ENCODE measurements at regions of chr11 and their contacts with region 1.

Region 1: GRCh38 chr11:7582338-7582985 is 68.7 kb downstream of the PPFIBP2 start:
- DNase-seq: no peak
- H3K4me3 ChIP-seq: no peak overlapping the region
- H3K4me1 ChIP-seq: peaks cover 39% of the 10 kb centered on the region
- H3K27me3 ChIP-seq: no peaks in the 10 kb centered on the region

Region 2: DNA sequence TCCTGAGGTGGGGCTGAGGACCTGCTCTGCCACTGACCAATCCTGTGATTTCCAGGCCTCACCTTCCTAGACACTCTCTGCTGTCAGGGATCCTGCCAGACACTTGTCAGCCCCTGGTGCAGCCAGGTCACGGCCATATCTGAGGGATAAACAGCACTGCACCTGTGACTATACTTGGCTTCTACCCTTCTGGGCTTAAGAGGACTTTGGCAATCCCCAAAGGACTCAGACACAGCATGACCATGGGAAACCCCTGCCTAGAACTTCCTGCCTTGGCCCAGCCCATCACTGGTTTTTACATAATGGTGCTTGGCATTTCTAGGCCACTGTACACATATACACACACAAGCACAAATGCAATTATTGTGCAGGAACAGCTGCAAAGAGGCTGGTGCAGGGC is 108.7 kb before region 1 on chr11:
- in situ Hi-C with region 1: no loop called
- DNase-seq: no peak
- H3K4me3 ChIP-seq: no peak overlapping the region
- H3K4me1 ChIP-seq: no peaks in the 10 kb centered on the region
- H3K27me3 ChIP-seq: no peaks in the 10 kb centered on the region

Region 3: GRCh38 chr11:7637447-7638157 is 55.1 kb after region 1 on chr11:
- in situ Hi-C with region 1: no loop called
- DNase-seq: no peak
- H3K4me3 ChIP-seq: no peak overlapping the region
- H3K4me1 ChIP-seq: no peaks in the 10 kb centered on the region
- H3K27me3 ChIP-seq: no peaks in the 10 kb centered on the region

Region 4: DNA sequence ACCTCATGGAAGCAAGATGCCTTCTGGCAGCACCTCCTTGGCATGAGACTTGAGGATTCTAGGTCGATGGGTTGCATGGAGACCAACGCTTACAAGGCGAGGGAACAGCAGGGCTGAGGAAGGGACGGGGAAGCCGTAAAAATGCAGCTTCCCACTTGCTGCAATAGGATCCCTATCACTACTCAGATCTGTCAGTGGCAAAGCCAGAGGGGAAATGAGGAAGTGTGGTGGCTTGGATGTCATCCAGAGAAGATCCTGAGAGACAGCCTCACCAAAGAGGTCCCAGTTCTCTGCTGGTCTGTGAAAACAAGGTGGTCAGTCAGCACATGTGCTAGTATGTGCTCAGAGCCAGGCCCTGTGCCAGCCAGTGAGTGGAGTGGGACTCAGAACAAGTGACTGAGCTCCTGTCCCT is 68.7 kb after region 1 on chr11:
- in situ Hi-C with region 1: loop called (anchors 5 kb)
- DNase-seq: no peak
- H3K4me3 ChIP-seq: no peak overlapping the region
- H3K4me1 ChIP-seq: peaks cover 8% of the 10 kb centered on the region
- H3K27me3 ChIP-seq: no peaks in the 10 kb centered on the region

Measured in HAP-1 (cell line).